Activated T-helper 1 cell treated with anti-CD3 and anti-CD28 coated beads, Interleukin-12 subunit alpha, Interleukin-12 subunit beta, Interleukin-2, Interleukin-4 antibody, amounts not matched to agents 30 ng/mL and 10 ng/mL and 1 ng/mL, durations not matched to agents 14 hours and 24 hours and 36 hours (primary cell): ENCODE measurements at regions of chr5 and their contacts with region 1.

Region 1: GRCh38 chr5:127492854-127493738 is 24.3 kb upstream of the PRRC1 start:
- DNase-seq: no peak
- H3K4me3 Mint-ChIP-seq: no peak overlapping the region
- H3K27ac Mint-ChIP-seq: no peak overlapping the region
- H3K4me1 Mint-ChIP-seq: no peaks in the 10 kb centered on the region
- H3K27me3 Mint-ChIP-seq: peaks cover 34% of the 10 kb centered on the region

Region 2: GRCh38 chr5:127290019-127290945 is 202.8 kb before region 1 on chr5 and contains the start of gene MEGF10:
- intact Hi-C with region 1: loop called (anchors 1 kb)
- DNase-seq: no peak
- H3K4me3 Mint-ChIP-seq: no peak within 1 kb of the TSS
- H3K27ac Mint-ChIP-seq: no peak within 1 kb of the TSS
- H3K4me1 Mint-ChIP-seq: no peaks in the 10 kb centered on the region
- H3K27me3 Mint-ChIP-seq: peaks cover 72% of the 10 kb centered on the region
- total RNA-seq, gene MEGF10: not detected in 2 replicates